ENCODE measurements at regions of chrX and their contacts with region 1.

Region 1: GRCh38 chrX:24748202-24748843 is 54.6 kb downstream of the POLA1 start:
- DNase-seq: no peak
- H3K4me3 ChIP-seq: no peak overlapping the region
- H3K27ac ChIP-seq: no peak overlapping the region
- H3K4me1 ChIP-seq: no peaks in the 10 kb centered on the region
- H3K27me3 ChIP-seq: no peaks in the 10 kb centered on the region; the same call in 1 of the 2 replicates
- CTCF ChIP-seq: no peak
- EP300 ChIP-seq: no peak
- RAD21 ChIP-seq: no peak

Region 2: GRCh38 chrX:24767557-24767956 is 19.2 kb after region 1 on chrX:
- CTCF ChIA-PET with region 1: interaction called, 19 read pairs
- POLR2A ChIA-PET with region 1: no interaction called
- DNase-seq: no peak
- H3K4me3 ChIP-seq: no peak overlapping the region
- H3K27ac ChIP-seq: no peak overlapping the region
- H3K4me1 ChIP-seq: no peaks in the 10 kb centered on the region
- H3K27me3 ChIP-seq: no peaks in the 10 kb centered on the region
- CTCF ChIP-seq: no peak
- EP300 ChIP-seq: no peak
- RAD21 ChIP-seq: no peak

Region 3: DNA sequence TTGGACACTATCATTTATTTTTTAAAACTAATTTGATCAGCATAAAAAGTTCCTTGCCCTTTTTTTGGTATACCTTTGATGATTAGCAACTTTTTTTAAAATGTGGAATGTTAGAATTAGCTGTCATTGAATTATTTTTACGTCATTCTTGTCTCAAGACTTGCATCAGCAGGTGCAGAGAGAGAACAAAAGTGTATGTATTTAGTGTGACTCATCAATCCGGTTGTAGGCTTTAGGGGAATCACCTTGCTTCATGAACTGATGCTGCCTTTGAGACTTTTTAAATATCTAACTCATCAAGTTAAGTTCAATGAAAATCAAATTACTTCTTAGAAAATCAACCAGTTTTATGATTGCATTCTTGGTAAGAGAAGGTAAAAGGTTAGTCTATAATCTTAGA is 142.4 kb after region 1 on chrX:
- CTCF ChIA-PET with region 1: no interaction called
- POLR2A ChIA-PET with region 1: no interaction called
- DNase-seq: no peak
- H3K4me3 ChIP-seq: no peak overlapping the region
- H3K27ac ChIP-seq: no peak overlapping the region
- H3K4me1 ChIP-seq: no peaks in the 10 kb centered on the region
- H3K27me3 ChIP-seq: no peaks in the 10 kb centered on the region
- CTCF ChIP-seq: no peak
- EP300 ChIP-seq: no peak
- RAD21 ChIP-seq: no peak

Region 4: GRCh38 chrX:25020905-25021449 is 272.7 kb after region 1 on chrX:
- CTCF ChIA-PET with region 1: interaction called, 12 read pairs
- POLR2A ChIA-PET with region 1: no interaction called
- DNase-seq: peak; percentile 88
- H3K4me3 ChIP-seq: peak overlapping the region; percentile 28 to 39
- H3K27ac ChIP-seq: no peak overlapping the region
- H3K4me1 ChIP-seq: peaks cover 0 to 9% of the 10 kb centered on the region in 2 experiments; a peak in 1 of 4 replicates
- H3K27me3 ChIP-seq: peaks cover 77% of the 10 kb centered on the region
- CTCF ChIP-seq: peak; percentile 69
- EP300 ChIP-seq: no peak
- RAD21 ChIP-seq: peak; percentile 62

Region 5: GRCh38 chrX:25049357-25049756 is 301.0 kb after region 1 on chrX:
- CTCF ChIA-PET with region 1: no interaction called
- POLR2A ChIA-PET with region 1: no interaction called
- DNase-seq: no peak
- H3K4me3 ChIP-seq: no peak overlapping the region
- H3K27ac ChIP-seq: no peak overlapping the region
- H3K4me1 ChIP-seq: peaks cover 0 to 14% of the 10 kb centered on the region in 2 experiments; a peak in 1 of 4 replicates
- H3K27me3 ChIP-seq: no peaks in the 10 kb centered on the region; the same call in 1 of the 2 replicates
- CTCF ChIP-seq: no peak
- EP300 ChIP-seq: no peak
- RAD21 ChIP-seq: no peak